ENCODE measurements at regions of chr19 and their contacts with region 1.

Region 1: DNA sequence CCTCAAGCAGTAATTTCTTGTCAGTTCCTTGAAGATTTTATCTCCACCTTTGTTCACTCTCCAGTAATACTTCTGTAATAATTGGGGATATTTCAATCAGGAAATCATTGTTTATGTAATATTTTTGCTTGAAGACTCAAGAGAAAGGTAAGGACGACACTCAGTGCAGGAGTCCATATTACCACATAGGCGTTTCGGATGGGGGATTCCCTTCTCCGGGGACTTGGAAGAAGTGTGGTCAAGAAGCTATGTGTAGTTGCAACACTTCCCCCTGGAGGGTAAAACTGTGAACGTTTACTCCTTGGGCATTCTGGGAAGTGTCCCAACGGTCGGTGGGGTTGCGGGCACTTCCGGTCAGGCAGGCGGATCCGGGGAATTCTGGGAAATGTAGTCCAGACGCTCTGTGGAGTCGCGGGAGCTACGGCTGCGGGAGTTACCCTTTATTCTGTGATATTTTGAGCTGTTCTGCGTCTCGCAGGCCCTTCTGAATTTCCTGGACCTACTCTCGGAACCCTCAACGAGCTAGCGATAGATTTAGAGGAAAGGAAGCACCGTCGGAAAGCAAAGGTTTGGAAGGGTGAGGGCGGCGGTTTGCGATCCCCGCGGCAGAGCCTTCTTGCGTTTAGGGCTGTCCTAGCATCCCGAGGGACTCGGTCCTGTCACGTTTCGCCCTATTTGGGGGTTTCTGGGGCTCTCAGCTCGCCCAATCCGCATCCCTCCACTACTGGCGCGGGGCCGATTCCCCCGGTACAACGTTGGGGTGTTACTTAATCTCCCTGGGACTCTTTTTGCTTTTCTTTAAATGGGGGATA is at the start of gene ZNF221:
- DNase-seq: peak; percentile 98 to 99
- ATAC-seq: peak; percentile 99 to 100
- H3K4me3 ChIP-seq: peak within 1 kb of the TSS; percentile 67
- H3K27ac ChIP-seq: peak within 1 kb of the TSS; percentile 61 to 73
- H3K4me1 ChIP-seq: no peaks in the 10 kb centered on the region
- CTCF ChIP-seq: peak; percentile 41; the same call in 2 of the 3 replicates
- EP300 ChIP-seq: no peak
- POLR2A ChIP-seq: no peak
- RAD21 ChIP-seq: peak; percentile 48 to 62; a peak in 4 of 5 replicates
- polyA plus RNA-seq, gene ZNF221: 1.6 and 2.4 TPM in 2 replicates

Region 2: GRCh38 chr19:43880483-43880882 is 70.6 kb before region 1 on chr19:
- CTCF ChIA-PET with region 1: no interaction called
- POLR2A ChIA-PET with region 1: no interaction called
- DNase-seq: no peak
- ATAC-seq: no peak
- H3K4me3 ChIP-seq: no peak overlapping the region
- H3K27ac ChIP-seq: no peak overlapping the region
- H3K4me1 ChIP-seq: no peaks in the 10 kb centered on the region
- CTCF ChIP-seq: no peak
- EP300 ChIP-seq: no peak
- POLR2A ChIP-seq: no peak
- RAD21 ChIP-seq: no peak

Region 3: GRCh38 chr19:43934985-43935708 is 15.9 kb before region 1 on chr19 and contains the start of gene ZNF45:
- CTCF ChIA-PET with region 1: interaction called, 11 read pairs
- POLR2A ChIA-PET with region 1: interaction called, 21 read pairs
- DNase-seq: peak; percentile 93 to 97
- ATAC-seq: peak; percentile 99 to 100
- H3K4me3 ChIP-seq: peak within 1 kb of the TSS; percentile 66
- H3K27ac ChIP-seq: peak within 1 kb of the TSS; percentile 81 to 89
- H3K4me1 ChIP-seq: no peaks in the 10 kb centered on the region
- CTCF ChIP-seq: no peak
- EP300 ChIP-seq: no peak
- POLR2A ChIP-seq: peak; percentile 56
- RAD21 ChIP-seq: no peak
- polyA plus RNA-seq, gene ZNF45: 19.9 and 20.9 TPM in 2 replicates